ENCODE measurements at regions of chr15 and their contacts with region 1.

Region 1: GRCh38 chr15:75182187-75183131 is 19.2 kb upstream of the C15orf39 start:
- DNase-seq: no peak
- H3K4me3 ChIP-seq: no peak overlapping the region
- H3K27me3 ChIP-seq: peaks cover 9% of the 10 kb centered on the region
- CTCF ChIP-seq: no peak

Region 2: DNA sequence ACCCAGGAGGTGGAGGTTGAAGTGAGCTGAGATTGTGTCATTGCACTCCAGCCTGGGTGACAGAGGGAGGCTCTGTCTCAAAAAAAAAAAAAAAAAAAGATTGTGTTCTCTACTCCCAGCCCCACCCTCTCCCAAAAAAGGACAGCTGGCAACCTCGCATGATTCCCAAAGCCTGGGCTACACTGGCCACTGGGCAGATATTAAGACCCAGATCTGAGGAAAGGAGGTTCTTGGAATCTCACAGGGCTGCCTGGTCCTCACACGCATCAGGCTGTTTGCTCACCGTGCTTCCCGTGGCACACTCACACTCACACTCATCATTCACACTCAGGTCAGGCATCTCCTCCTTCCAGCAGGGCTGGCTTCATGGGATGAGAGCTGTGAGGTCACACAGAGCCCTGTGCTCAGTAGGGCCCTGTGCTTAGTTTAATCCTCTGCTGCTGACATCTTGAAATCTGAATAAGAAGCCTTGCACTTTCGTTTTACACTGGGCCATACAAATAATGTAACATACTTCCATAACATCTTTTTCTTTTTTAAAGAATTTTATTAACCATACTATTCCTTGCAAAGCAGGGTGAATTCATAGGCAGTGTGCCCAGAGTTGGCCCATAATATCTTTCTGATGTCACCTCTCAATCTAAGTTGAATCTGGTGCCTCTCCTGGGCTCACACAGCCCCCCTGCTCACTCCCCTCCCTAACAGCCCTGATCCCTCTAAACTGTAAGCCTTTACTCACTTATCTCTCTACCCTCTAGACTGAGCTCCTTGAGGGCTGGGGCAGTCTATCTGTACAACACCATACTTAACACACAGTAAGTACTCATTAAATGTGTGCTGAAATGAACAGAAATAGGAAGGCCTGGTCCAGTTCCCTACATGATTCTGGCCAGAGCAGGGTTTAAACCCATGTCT is 31.0 kb before region 1 on chr15:
- CTCF ChIA-PET with region 1: no interaction called
- POLR2A ChIA-PET with region 1: interaction called, 12 read pairs
- DNase-seq: no peak
- H3K4me3 ChIP-seq: no peak overlapping the region
- H3K27me3 ChIP-seq: no peaks in the 10 kb centered on the region
- CTCF ChIP-seq: no peak

Region 3: DNA sequence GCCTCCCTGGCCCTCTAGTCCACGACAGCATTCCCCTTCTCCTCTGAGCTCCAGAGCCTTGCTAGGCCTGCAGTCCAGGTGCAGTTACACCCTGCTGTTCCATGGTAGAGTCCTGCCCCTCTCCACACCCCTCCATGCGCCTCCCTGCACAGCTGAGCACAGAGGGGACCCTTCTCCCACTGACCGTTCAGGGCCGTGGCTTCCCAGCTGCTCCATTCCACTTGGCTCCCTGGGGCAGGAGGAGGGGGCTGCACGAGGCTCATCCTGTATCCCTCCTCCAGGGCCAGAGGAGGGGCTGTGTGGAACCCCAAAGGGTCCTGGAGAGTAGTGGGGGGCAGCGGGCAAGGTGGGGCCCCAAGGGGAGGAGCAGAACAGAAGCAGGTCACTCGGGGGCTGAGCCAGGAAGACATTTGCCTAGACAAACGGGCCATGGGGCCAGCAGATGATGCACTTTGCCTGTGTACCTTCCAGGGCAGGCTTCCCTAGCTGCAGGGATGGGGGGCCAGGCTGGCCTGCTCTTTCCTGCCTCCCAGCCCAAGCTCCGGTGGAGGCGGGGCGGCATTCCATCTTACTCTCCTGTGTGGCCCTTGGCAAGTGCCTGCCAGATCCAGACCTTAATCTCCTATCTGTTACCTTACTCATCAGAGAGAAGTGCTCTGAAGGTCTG is 55.0 kb after region 1 on chr15:
- CTCF ChIA-PET with region 1: no interaction called
- POLR2A ChIA-PET with region 1: no interaction called
- DNase-seq: no peak
- H3K4me3 ChIP-seq: no peak overlapping the region
- H3K27me3 ChIP-seq: peaks cover 13% of the 10 kb centered on the region; the same call in 1 of the 2 replicates
- CTCF ChIP-seq: no peak

Measured in BJ (cell line).